ENCODE measurements at regions of chr1 and their contacts with region 1.

Region 1: DNA sequence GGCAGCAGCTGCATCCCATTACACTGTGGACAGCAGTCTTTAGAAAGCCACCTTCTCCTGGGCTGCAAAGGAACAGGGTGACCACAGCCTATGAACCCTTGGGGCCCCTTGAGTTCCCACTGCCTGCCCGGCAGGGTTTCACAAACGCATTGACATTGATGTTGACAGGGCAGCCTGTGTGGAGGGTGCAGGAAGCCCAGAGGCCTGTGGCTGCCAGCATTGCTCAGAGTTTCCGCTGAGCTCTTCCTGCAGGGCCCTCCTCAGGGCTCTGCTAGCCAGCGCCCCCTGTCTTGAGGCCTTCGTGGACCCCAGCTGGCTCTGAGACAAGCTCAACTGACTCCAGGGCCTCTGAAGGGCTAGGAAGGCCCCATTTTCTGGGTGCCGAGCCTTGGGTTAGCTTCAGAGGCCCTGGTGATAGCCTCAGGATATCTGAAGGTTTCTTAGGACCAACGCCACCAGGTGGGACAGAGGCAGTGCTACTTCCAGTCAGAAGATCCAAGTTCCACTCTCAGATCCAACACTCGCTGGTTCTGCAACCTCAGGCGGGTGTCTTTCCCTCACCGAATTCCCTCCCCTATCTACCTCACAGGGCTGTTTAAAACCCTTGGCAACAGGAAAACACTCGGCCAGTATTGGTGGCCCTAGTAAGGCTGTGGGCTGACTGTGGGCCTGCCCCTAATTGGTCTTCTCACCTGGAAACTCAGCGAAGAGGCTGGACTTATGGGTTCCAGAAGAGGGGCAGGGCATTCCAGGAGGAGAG is 27.2 kb upstream of the EPS8L3 start:
- DNase-seq: peak; percentile 79 to 82 (median 80)
- ATAC-seq: peak; percentile 46 to 71
- H3K4me3 ChIP-seq: no peak overlapping the region
- H3K27ac ChIP-seq: peak overlapping the region; percentile 13
- H3K4me1 ChIP-seq: peaks cover 34% of the 10 kb centered on the region
- H3K27me3 ChIP-seq: no peaks in the 10 kb centered on the region

Region 2: GRCh38 chr1:108877348-108878159 is 913.4 kb before region 1 on chr1:
- intact Hi-C with region 1: no loop called
- DNase-seq: no peak
- ATAC-seq: peak in 1 of 2 donors; percentile 4
- H3K4me3 ChIP-seq: peak overlapping the region; percentile 84
- H3K27ac ChIP-seq: no peak overlapping the region
- H3K4me1 ChIP-seq: no peaks in the 10 kb centered on the region
- H3K27me3 ChIP-seq: no peaks in the 10 kb centered on the region

Region 3: DNA sequence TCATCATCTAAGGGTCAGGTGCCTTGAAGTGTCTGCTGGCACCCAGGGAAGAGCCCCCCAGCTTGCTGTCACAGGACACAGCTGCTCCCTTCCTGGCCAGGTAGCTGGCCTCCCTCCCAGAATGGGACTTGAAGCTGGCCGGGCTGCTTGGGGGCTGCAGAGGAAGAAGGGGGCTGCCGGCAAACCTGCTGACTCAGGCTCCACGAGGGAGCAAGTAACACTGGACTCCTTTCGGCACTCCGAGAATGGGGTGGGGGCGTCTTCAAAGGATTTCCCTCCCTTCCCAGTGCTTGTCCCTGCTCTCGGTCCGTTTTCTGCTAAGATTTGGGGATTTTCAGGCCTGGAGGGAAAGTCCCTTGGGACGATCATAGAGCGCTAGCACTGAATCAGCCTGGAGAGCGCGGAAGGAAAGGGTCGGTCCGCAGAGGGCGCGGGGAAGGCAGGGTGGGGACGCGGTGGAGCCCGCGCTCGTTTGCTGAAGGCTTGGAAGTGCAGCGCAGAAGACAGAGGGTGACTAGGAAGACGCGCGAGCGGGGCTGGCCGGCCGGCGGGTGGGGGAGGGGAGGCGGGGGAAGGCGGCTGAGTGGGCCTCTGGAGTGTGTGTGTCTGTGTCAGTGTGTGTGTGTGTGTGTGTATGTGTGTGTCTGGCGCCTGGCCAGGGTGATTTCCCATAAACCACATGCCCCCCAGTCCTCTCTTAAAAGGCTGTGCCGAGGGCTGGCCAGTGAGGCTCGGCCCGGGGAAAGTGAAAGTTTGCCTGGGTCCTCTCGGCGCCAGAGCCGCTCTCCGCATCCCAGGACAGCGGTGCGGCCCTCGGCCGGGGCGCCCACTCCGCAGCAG is 119.4 kb after region 1 on chr1 and contains the start of gene CSF1:
- intact Hi-C with region 1: loop called in 1 of 4 experiments (anchors 5 kb)
- DNase-seq: peak; percentile 82 to 93 (median 92)
- ATAC-seq: peak; percentile 82 to 84
- H3K4me3 ChIP-seq: peak within 1 kb of the TSS; percentile 86
- H3K27ac ChIP-seq: peak within 1 kb of the TSS; percentile 76
- H3K4me1 ChIP-seq: peaks cover 26% of the 10 kb centered on the region
- H3K27me3 ChIP-seq: no peaks in the 10 kb centered on the region
- total RNA-seq, gene CSF1: 13.9 to 22.6 (median 19.4) TPM

Region 4: GRCh38 chr1:109947582-109948286 is 156.8 kb after region 1 on chr1:
- intact Hi-C with region 1: no loop called
- DNase-seq: no peak
- ATAC-seq: peak; percentile 31 to 52
- H3K4me3 ChIP-seq: no peak overlapping the region
- H3K27ac ChIP-seq: peak overlapping the region; percentile 1
- H3K4me1 ChIP-seq: no peaks in the 10 kb centered on the region
- H3K27me3 ChIP-seq: no peaks in the 10 kb centered on the region